ENCODE measurements at regions of chr1 and their contacts with region 1.

Region 1: DNA sequence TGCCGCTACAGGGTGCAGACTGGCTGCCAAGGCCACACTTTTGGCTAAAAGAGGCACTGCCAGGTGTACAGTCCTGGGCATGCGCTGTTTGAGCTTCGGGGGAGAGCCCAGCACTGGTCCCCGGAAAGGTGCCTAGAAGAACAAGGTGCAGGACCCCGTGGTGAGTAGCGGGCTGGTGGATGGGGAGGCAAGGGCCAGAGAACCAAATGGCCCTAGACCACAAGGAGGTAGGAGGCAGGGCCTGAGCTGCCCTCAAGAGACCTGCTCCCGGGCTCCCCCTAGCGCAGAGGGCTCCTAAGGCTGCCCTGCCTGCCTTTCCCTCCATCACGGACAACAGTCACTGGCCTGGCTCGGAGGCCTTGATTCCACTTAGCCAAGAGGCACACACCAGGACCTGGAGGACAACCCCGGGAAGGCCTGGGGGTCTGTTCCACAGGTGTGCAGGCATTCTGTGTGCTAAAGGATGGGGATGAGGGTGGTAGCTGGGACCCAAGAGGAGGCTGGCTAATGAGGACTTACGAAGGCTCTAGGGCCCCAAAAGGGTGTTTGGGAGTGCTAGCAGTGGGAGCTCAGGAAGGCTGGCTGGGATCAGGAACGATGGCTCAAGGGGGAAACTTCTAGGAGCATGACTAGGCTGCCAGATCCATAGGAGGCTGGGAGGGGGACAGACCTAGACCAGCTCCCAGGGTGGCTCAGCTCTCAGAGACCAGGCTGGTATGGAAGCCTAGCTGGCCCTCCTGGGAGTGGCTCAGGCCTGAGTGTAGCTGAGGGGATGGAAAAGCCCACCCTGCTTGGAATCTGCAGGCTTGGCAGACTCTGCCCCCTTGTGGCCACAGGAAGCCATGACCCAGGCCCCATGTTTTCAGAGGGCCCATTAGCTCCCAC is 742 bp downstream of the ARTN start:
- DNase-seq: no peak

Region 2: GRCh38 chr1:43763497-43763973 is 170.8 kb before region 1 on chr1:
- intact Hi-C with region 1: loop called (anchors 1 kb)
- DNase-seq: no peak